AG04450 (cell line): ENCODE measurements at regions of chr2 and their contacts with region 1.

Region 1: DNA sequence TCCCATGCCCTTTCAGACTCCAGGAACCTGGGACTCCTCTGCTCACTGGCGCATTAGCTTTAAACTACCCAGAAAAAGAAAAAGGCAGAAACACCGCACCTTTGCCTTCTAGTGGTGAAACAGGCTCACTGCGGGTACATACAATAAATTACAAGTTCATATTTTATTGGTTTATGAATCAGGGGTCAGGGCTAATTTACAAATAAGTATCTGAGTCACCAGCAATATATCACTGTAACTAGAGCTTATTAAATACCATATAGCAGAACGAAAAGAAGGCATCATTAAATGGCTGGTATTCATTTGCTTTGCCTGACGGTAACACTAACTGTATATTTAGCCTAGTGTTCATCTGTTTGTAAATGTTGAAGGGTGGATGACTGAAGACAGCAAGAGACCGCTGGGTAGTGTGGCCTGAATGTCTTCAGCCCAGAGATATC is 26.9 kb upstream of the DTNB start:
- DNase-seq: no peak
- H3K4me3 ChIP-seq: no peak overlapping the region
- H3K27ac ChIP-seq: no peak overlapping the region
- H3K27me3 ChIP-seq: peaks cover 12% of the 10 kb centered on the region
- CTCF ChIP-seq: peak; percentile 82

Region 2: GRCh38 chr2:25190536-25190935 is 509.7 kb before region 1 on chr2:
- CTCF ChIA-PET with region 1: no interaction called
- POLR2A ChIA-PET with region 1: interaction called, 10 read pairs
- DNase-seq: no peak
- H3K4me3 ChIP-seq: no peak overlapping the region
- H3K27ac ChIP-seq: no peak overlapping the region
- H3K27me3 ChIP-seq: peaks cover 19% of the 10 kb centered on the region
- CTCF ChIP-seq: no peak

Region 3: GRCh38 chr2:25720575-25720974 is 20.3 kb after region 1 on chr2:
- CTCF ChIA-PET with region 1: interaction called, 14 read pairs
- POLR2A ChIA-PET with region 1: no interaction called
- DNase-seq: no peak
- H3K4me3 ChIP-seq: no peak overlapping the region
- H3K27ac ChIP-seq: no peak overlapping the region
- H3K27me3 ChIP-seq: peaks cover 13% of the 10 kb centered on the region
- CTCF ChIP-seq: no peak